ENCODE measurements at regions of chr1 and their contacts with region 1.

Region 1: DNA sequence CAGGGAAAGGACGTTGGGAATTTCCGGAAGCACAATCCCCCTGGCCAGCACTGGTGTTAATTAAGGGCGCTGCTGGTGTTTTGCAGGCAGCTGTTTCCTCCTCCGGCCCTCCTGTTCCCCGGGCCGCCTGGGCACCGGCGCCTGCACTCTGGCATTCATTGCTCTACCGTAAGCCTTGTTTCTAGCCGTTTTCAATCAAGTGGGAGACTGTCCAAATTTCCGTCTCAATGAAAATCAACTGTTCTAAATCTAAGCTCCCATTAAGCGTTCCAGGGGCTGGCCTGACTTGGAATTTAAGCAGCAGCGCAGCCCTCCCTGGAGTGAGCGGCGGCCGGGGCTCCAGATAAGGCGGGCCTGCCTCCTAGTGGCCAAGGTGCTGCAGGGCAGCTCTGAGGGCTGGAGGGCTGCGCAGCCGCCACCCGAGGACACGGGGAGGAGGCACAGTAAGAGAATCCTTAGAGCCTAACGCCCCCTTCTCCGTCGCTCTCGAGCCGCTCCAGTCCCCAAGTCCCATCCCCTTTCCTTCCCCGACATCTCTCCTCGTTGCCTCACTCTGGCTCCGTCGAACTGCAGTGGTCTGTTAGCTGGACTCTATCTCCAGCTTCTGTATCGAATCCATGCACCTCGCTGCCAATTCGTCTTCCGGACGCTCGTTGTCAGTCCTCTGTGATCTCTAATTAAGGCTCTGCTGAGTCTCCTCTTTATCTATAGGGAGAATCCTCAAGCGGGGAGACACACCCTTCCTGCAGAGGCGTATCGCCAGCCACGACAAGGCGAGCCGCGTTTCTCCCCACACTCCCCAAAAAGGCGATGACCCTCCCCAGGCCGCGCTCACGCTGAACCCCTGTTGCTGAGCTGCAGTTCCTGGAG is 57.8 kb upstream of the LRRC8D start:
- DNase-seq: peak; percentile 87
- H3K4me3 ChIP-seq: peak overlapping the region; percentile 12 to 54 (median 38)
- H3K27ac ChIP-seq: peak overlapping the region; percentile 4 to 50 (median 26)
- H3K4me1 ChIP-seq: peaks cover 0 to 18% (median 6%) of the 10 kb centered on the region in 4 donors
- H3K27me3 ChIP-seq: no peaks in the 10 kb centered on the region
- CTCF ChIP-seq: peak; percentile 93 to 98 (median 95)
- EP300 ChIP-seq: no peak
- POLR2A ChIP-seq: no peak

Region 2: GRCh38 chr1:89483010-89483756 is 279.8 kb before region 1 on chr1:
- in situ Hi-C with region 1: loop called in 1 of 4 experiments (anchors 25 kb)
- intact Hi-C with region 1: loop called (anchors 10 kb)
- DNase-seq: peak; percentile 79
- H3K4me3 ChIP-seq: no peak overlapping the region
- H3K27ac ChIP-seq: no peak overlapping the region
- H3K4me1 ChIP-seq: no peaks in the 10 kb centered on the region
- H3K27me3 ChIP-seq: no peaks in the 10 kb centered on the region
- CTCF ChIP-seq: peak; percentile 54 to 74 (median 72)
- EP300 ChIP-seq: no peak
- POLR2A ChIP-seq: no peak

Region 3: GRCh38 chr1:89524369-89525168 is 238.4 kb before region 1 on chr1 and contains the start of gene LRRC8B:
- in situ Hi-C with region 1: loop called in 3 of 4 experiments (anchors 25 kb)
- intact Hi-C with region 1: no loop called
- DNase-seq: peak; percentile 93
- H3K4me3 ChIP-seq: peak within 1 kb of the TSS; percentile 65 to 96 (median 70)
- H3K27ac ChIP-seq: peak within 1 kb of the TSS; percentile 79 to 94 (median 90)
- H3K4me1 ChIP-seq: peaks cover 0 to 32% (median 10%) of the 10 kb centered on the region in 4 donors
- H3K27me3 ChIP-seq: no peaks in the 10 kb centered on the region
- CTCF ChIP-seq: peak in 1 of 5 experiments; percentile 26
- EP300 ChIP-seq: no peak
- POLR2A ChIP-seq: peak; percentile 67
- total RNA-seq, gene LRRC8B: 7.0 to 10.5 (median 8.7) TPM

Region 4: DNA sequence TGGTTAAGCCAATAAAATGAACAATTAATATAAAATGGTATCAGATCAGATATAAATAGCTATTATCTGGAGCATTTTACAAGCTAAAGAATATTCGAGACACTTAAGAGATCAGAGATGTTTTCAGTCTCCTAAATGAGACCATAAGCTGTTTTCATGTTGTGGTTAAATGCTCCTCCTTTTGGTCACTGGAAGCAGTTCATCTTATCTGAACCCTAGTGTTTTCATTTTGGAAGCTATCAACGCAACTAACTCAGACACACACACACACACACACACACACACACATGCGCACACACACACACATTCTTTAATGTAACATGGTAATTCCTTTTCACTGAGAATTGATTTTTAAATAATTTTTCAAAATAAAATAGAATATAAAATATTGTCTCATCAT is 140.1 kb before region 1 on chr1:
- in situ Hi-C with region 1: loop called in 3 of 4 experiments (anchors 10 to 25 kb)
- intact Hi-C with region 1: no loop called
- DNase-seq: no peak
- H3K4me3 ChIP-seq: no peak overlapping the region
- H3K27ac ChIP-seq: no peak overlapping the region
- H3K4me1 ChIP-seq: no peaks in the 10 kb centered on the region
- H3K27me3 ChIP-seq: no peaks in the 10 kb centered on the region
- CTCF ChIP-seq: no peak
- EP300 ChIP-seq: no peak
- POLR2A ChIP-seq: no peak

Region 5: GRCh38 chr1:89632657-89633247 is 130.3 kb before region 1 on chr1 and contains the start of gene LRRC8C:
- in situ Hi-C with region 1: loop called (anchors 10 to 25 kb)
- intact Hi-C with region 1: loop called (anchors 5 kb)
- DNase-seq: peak; percentile 84
- H3K4me3 ChIP-seq: peak within 1 kb of the TSS; percentile 60 to 85 (median 82)
- H3K27ac ChIP-seq: peak within 1 kb of the TSS; percentile 84 to 87 (median 84)
- H3K4me1 ChIP-seq: peaks cover 0 to 17% (median 14%) of the 10 kb centered on the region in 4 donors
- H3K27me3 ChIP-seq: peaks cover 7% of the 10 kb centered on the region
- CTCF ChIP-seq: peak in 2 of 5 experiments; percentile 18 to 26
- EP300 ChIP-seq: no peak
- POLR2A ChIP-seq: peak; percentile 17
- total RNA-seq, gene LRRC8C: 2.4 to 4.4 (median 2.7) TPM

Region 6: DNA sequence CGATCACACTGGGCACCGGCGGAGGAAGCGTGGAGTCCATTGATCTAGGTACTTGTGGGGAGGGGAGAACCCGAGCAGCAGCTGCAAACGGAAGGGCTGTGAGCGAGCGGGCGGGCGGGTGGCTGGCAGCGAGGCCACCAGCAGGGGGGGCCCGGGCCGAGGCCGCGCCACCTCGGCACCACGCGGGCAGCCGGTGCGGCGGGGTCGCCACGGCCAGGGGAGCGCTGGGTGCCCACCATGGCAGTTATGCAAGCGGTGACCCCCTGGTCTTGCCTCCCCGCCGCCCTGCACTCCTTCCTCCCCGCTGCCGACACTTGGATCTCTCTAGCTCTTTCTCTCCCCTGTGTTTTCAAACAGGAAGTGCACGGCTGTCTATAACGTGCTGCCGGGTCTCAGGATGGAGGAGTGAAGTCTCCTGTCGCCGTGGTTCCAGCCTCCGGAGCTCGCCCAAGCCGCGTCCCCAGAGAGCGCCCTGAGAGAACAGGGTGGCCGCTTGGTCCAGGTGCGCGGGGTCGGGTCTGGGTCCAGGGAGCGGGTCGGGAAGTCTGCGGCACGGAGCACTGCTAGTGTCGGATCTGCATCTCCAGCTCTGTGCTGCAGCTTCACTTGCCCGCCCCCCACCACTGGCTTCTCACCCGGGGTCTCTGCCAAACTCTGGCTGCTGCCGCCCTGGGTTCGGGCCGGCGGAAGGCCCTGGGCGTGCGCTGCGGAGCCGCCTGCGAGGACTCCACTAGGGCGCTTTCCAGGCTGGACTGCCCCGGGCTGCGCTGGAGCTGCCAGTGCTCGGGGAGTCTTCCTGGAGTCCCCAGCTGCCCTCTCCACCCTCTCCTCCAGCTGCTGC is 80.5 kb after region 1 on chr1:
- in situ Hi-C with region 1: no loop called
- intact Hi-C with region 1: no loop called
- DNase-seq: peak; percentile 80
- H3K4me3 ChIP-seq: peak overlapping the region; percentile 64 to 82 (median 73)
- H3K27ac ChIP-seq: peak overlapping the region; percentile 76 to 86 (median 85)
- H3K4me1 ChIP-seq: peaks cover 5 to 23% (median 10%) of the 10 kb centered on the region in 4 donors
- H3K27me3 ChIP-seq: no peaks in the 10 kb centered on the region
- CTCF ChIP-seq: peak; percentile 35 to 74 (median 61)
- EP300 ChIP-seq: no peak
- POLR2A ChIP-seq: peak; percentile 17

Region 7: GRCh38 chr1:89974701-89975470 is 211.9 kb after region 1 on chr1:
- in situ Hi-C with region 1: no loop called
- intact Hi-C with region 1: no loop called
- DNase-seq: no peak
- H3K4me3 ChIP-seq: no peak overlapping the region
- H3K27ac ChIP-seq: no peak overlapping the region
- H3K4me1 ChIP-seq: peaks cover 0 to 9% (median 2%) of the 10 kb centered on the region in 4 donors
- H3K27me3 ChIP-seq: no peaks in the 10 kb centered on the region
- CTCF ChIP-seq: no peak
- EP300 ChIP-seq: no peak
- POLR2A ChIP-seq: no peak